ENCODE measurements at regions of chr9 and their contacts with region 1.

Region 1: DNA sequence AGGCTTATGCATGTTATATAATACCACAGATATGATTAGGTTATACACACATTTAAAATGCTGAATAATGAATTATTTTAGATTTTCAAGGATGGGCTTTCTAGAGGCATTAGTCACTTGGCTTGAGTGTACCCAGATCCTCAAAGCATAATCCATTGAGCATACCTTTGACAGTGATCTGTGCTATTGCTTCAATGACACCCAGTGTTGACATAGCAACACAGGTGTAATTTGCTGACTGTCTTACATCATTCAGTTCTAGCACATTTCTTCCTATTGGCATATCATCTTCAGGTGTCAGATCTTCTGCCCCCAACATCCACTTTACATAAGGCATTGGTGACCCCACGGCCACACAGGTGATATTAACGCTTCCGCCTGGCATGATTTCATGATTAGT is 721.5 kb upstream of the DMAC1 start:
- DNase-seq: no peak

Region 2: DNA sequence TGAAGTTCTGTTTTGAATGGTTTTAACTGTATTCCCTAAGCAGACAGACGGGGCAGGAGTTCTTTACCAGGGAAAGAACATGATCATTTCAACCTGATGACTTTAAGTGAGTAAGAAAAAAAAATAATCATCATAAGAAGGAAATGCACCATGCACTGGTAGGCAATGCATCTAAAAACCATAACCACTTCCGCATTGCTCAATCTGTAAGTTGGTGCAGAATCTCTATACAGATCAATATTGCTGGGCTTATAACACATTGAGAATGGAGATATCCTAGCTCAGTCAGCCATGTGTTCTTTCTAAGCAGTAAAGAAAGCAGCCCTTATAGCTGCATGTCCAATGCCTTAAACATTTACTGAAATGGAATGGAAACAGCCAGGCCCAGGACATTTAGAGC is 314.4 kb before region 1 on chr9:
- intact Hi-C with region 1: no loop called
- DNase-seq: no peak

Region 3: GRCh38 chr9:8542537-8542936 is 21.4 kb after region 1 on chr9:
- intact Hi-C with region 1: loop called (anchors 2 kb)
- DNase-seq: no peak

Region 4: DNA sequence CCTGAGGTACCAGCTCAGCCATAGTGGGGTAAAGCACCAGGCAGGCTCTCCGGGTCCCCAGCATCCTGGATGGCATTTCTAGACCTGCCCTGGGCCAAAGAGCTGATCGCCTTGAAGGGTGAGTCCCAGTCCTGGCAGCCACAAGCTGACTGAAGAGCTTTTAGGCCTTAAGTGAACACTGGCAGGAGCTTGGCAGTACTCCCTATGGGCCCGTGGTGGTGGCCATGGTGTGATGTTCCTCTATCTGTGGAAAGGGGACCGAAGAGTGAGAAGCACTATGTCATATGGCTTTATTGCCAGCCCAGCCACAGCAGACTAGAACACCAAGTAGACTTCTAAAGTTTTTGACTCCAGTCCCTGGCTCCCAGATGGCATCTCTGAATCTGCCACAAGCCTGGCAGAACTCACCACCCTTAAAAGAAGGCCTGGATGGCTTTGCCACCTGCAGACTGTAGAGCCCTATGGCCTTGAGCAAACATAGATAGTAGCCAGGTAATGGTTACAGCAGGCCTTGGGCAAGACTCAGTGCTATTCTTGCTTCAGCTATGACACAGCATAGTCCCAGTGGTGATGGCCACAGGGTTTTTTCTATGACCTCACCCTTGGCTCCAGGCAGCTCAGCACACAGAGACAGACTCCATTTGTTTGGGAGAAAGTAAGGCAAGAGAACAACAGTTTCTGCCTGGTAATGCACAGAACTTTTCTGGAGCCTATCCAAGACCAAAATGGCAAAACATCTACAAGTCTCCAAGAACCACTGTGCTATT is 80.0 kb after region 1 on chr9:
- intact Hi-C with region 1: no loop called
- DNase-seq: peak in 7 of 10 donors; percentile 20 to 93 (median 52)